Naive thymus-derived CD4-positive, alpha-beta T cell (primary cell): ENCODE measurements at regions of chr15 and their contacts with region 1.

Region 1: GRCh38 chr15:75367913-75368688 is at the start of gene MAN2C1:
- DNase-seq: peak; percentile 80 to 96 (median 87)
- ATAC-seq: peak; percentile 98
- H3K4me3 ChIP-seq: peak within 1 kb of the TSS; percentile 75
- H3K4me3 Mint-ChIP-seq: peak within 1 kb of the TSS; percentile 88 to 94 (median 92)
- H3K27ac ChIP-seq: peak within 1 kb of the TSS; percentile 93
- H3K27ac Mint-ChIP-seq: peak within 1 kb of the TSS; percentile 90 to 97 (median 94)
- H3K4me1 ChIP-seq: peaks cover 11 to 15% of the 10 kb centered on the region in 2 donors
- H3K4me1 Mint-ChIP-seq: peaks cover 8 to 28% (median 24%) of the 10 kb centered on the region in 7 donors
- H3K27me3 ChIP-seq: no peaks in the 10 kb centered on the region
- H3K27me3 Mint-ChIP-seq: no peaks in the 10 kb centered on the region
- total RNA-seq, gene MAN2C1: 298 to 557 (median 451) TPM

Region 2: GRCh38 chr15:75347222-75347878 is 20.8 kb before region 1 on chr15:
- CTCF ChIA-PET with region 1: interaction called, 15 read pairs
- POLR2A ChIA-PET with region 1: interaction called, 94 read pairs
- intact Hi-C with region 1: loop called (anchors 1 to 2 kb)
- DNase-seq: peak; percentile 35 to 75 (median 69)
- ATAC-seq: peak; percentile 73
- H3K4me3 ChIP-seq: peak overlapping the region; percentile 59
- H3K4me3 Mint-ChIP-seq: peak overlapping the region; percentile 78 to 95 (median 90)
- H3K27ac ChIP-seq: peak overlapping the region; percentile 66
- H3K27ac Mint-ChIP-seq: peak overlapping the region; percentile 78 to 95 (median 89)
- H3K4me1 ChIP-seq: peaks cover 29 to 30% of the 10 kb centered on the region in 2 donors
- H3K4me1 Mint-ChIP-seq: peaks cover 21 to 45% (median 31%) of the 10 kb centered on the region in 7 donors
- H3K27me3 ChIP-seq: no peaks in the 10 kb centered on the region
- H3K27me3 Mint-ChIP-seq: peaks cover 0 to 26% (median 0%) of the 10 kb centered on the region in 5 donors

Region 3: GRCh38 chr15:75380773-75381172 is 12.7 kb after region 1 on chr15:
- CTCF ChIA-PET with region 1: interaction called, 11 read pairs
- POLR2A ChIA-PET with region 1: interaction called, 13 read pairs
- intact Hi-C with region 1: loop called in 1 of 2 experiments (anchors 2 kb)
- DNase-seq: no peak
- ATAC-seq: no peak
- H3K4me3 ChIP-seq: no peak overlapping the region
- H3K4me3 Mint-ChIP-seq: no peak overlapping the region
- H3K27ac ChIP-seq: no peak overlapping the region
- H3K27ac Mint-ChIP-seq: peak overlapping the region in 2 of 9 donors; percentile 2 to 22
- H3K4me1 ChIP-seq: no peaks in the 10 kb centered on the region
- H3K4me1 Mint-ChIP-seq: peaks cover 0 to 4% (median 0%) of the 10 kb centered on the region in 7 donors
- H3K27me3 ChIP-seq: no peaks in the 10 kb centered on the region
- H3K27me3 Mint-ChIP-seq: no peaks in the 10 kb centered on the region

Region 4: DNA sequence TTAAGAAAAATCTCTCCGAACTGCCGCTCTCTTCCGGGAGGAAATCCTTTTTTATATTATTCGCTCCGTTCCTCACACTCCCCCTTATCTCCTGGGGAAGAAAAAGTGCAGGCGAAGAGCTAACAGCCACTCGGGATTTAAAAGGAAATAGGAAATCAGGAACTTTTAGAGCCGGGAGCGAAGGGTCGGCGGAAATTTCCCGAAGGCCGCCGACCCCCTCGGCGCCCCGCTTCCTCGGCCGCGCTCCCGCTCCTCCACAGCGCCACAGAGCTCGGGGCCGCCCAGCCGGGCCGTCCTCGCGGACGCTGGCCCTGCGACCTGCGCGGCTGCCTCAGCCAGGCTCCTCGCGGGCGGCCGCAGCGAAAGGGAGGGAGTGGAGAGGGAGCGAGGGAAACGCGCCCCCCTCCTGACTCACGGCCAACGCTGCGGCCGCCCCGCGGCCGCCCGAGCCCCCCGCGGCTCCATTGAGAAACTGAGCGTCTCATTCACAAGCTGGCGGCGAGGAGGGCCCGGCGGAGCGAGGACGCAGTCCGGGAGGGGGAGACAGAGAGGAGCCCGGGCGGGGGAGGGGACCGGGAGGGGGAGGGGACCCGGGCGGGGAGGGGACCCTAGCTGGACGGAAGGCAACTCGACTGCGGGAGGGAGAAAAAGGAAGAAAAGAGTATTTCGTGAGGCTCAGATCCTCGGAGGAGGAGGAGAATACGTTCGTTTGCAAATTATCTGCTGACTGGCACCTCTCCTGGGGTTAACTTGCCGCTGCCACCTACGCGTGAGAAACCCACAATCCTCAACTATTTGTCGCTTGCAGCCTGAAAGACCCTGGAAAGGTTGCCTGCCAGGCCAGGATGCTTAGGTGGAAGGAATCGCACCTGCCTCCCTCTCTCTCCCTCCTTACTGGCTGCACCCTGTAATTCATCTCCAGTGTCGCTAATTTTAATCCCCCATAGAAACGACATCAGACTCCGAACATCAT is 211.1 kb after region 1 on chr15 and contains the start of gene PTPN9:
- CTCF ChIA-PET with region 1: interaction called, 3 read pairs
- POLR2A ChIA-PET with region 1: interaction called, 5 read pairs
- intact Hi-C with region 1: loop called (anchors 1 to 10 kb)
- DNase-seq: peak; percentile 42 to 74 (median 61)
- ATAC-seq: peak; percentile 90
- H3K4me3 ChIP-seq: peak within 1 kb of the TSS; percentile 77
- H3K4me3 Mint-ChIP-seq: peak within 1 kb of the TSS; percentile 91 to 97 (median 94)
- H3K27ac ChIP-seq: peak within 1 kb of the TSS; percentile 78
- H3K27ac Mint-ChIP-seq: peak within 1 kb of the TSS; percentile 86 to 97 (median 90)
- H3K4me1 ChIP-seq: peaks cover 10 to 16% of the 10 kb centered on the region in 2 donors
- H3K4me1 Mint-ChIP-seq: peaks cover 13 to 27% (median 24%) of the 10 kb centered on the region in 7 donors
- H3K27me3 ChIP-seq: no peaks in the 10 kb centered on the region
- H3K27me3 Mint-ChIP-seq: no peaks in the 10 kb centered on the region
- total RNA-seq, gene PTPN9: 11.2 to 35.6 (median 15.7) TPM

Region 5: GRCh38 chr15:75684642-75685041 is 316.5 kb after region 1 on chr15:
- CTCF ChIA-PET with region 1: interaction called, 6 read pairs
- POLR2A ChIA-PET with region 1: no interaction called
- intact Hi-C with region 1: loop called in 1 of 2 experiments (anchors 1 kb)
- DNase-seq: no peak
- ATAC-seq: no peak
- H3K4me3 ChIP-seq: no peak overlapping the region
- H3K4me3 Mint-ChIP-seq: no peak overlapping the region
- H3K27ac ChIP-seq: no peak overlapping the region
- H3K27ac Mint-ChIP-seq: no peak overlapping the region
- H3K4me1 ChIP-seq: no peaks in the 10 kb centered on the region
- H3K4me1 Mint-ChIP-seq: peaks cover 0 to 4% (median 0%) of the 10 kb centered on the region in 7 donors
- H3K27me3 ChIP-seq: no peaks in the 10 kb centered on the region
- H3K27me3 Mint-ChIP-seq: no peaks in the 10 kb centered on the region